Activated CD8-positive, alpha-beta T cell treated with anti-CD3 and anti-CD28 coated beads for 36 hours (primary cell): ENCODE measurements at regions of chr5 and their contacts with region 1.

Region 1: DNA sequence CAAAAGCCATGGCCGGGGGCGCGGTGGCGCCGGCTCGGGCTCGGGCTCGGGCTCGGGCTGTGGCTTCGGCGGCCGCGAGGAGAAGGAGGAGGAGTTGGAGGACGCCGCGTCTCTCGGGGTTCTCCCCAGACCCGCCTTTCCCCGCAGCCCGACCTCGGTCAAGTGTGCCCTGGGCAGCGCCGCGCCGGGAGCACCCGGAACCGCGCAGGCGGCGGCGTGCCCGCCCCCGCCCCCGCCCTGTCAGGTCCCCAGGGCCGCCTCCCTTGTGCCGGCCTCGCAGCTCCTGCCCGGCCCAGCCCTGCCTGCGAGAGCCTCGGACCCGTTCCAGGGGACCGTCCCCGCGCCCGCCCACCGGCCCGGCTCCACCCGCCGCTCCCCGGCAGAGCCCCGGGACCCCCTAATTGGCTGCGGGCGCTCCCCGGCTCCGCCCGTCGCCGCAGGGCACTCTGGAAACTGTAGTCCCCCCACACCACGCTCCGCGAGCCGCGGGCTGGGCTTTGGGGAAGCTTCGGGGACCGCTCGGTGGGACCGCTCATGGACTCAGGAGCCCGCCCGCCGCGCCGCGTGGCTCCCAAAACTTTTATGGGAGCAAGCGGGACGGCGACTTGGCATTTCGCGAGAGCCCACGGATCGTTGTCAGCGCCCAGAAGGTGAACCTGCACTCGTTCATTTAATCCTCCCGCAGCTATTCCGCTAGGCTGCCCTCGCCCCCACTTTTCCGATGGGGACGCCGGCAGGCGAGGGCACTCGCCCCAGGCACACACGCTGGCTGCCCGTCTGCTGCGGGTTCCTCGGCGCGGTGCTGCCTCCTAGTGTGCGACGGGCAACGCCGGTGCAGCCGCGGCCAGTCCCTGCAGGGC is at the start of gene STK10:
- DNase-seq: peak; percentile 93
- ATAC-seq: peak; percentile 76
- H3K4me3 Mint-ChIP-seq: peak within 1 kb of the TSS; percentile 92
- H3K27ac Mint-ChIP-seq: peak within 1 kb of the TSS; percentile 96
- H3K4me1 Mint-ChIP-seq: peaks cover 18% of the 10 kb centered on the region
- H3K27me3 Mint-ChIP-seq: no peaks in the 10 kb centered on the region
- CTCF ChIP-seq: peak; percentile 90
- total RNA-seq, gene STK10: 142 to 143 TPM

Region 2: GRCh38 chr5:171907725-171908343 is 280.4 kb before region 1 on chr5:
- CTCF ChIA-PET with region 1: interaction called, 9 read pairs
- POLR2A ChIA-PET with region 1: no interaction called
- intact Hi-C with region 1: loop called (anchors 5 kb)
- DNase-seq: peak; percentile 67
- ATAC-seq: peak; percentile 81
- H3K4me3 Mint-ChIP-seq: no peak overlapping the region
- H3K27ac Mint-ChIP-seq: peak overlapping the region; percentile 79
- H3K4me1 Mint-ChIP-seq: peaks cover 63% of the 10 kb centered on the region
- H3K27me3 Mint-ChIP-seq: no peaks in the 10 kb centered on the region
- CTCF ChIP-seq: peak; percentile 88

Region 3: GRCh38 chr5:172071289-172071875 is 116.9 kb before region 1 on chr5:
- CTCF ChIA-PET with region 1: interaction called, 21 read pairs
- POLR2A ChIA-PET with region 1: interaction called, 3 read pairs
- intact Hi-C with region 1: loop called (anchors 2 kb)
- DNase-seq: no peak
- ATAC-seq: peak; percentile 15
- H3K4me3 Mint-ChIP-seq: no peak overlapping the region
- H3K27ac Mint-ChIP-seq: peak overlapping the region; percentile 73
- H3K4me1 Mint-ChIP-seq: peaks cover 39% of the 10 kb centered on the region
- H3K27me3 Mint-ChIP-seq: no peaks in the 10 kb centered on the region
- CTCF ChIP-seq: no peak

Region 4: DNA sequence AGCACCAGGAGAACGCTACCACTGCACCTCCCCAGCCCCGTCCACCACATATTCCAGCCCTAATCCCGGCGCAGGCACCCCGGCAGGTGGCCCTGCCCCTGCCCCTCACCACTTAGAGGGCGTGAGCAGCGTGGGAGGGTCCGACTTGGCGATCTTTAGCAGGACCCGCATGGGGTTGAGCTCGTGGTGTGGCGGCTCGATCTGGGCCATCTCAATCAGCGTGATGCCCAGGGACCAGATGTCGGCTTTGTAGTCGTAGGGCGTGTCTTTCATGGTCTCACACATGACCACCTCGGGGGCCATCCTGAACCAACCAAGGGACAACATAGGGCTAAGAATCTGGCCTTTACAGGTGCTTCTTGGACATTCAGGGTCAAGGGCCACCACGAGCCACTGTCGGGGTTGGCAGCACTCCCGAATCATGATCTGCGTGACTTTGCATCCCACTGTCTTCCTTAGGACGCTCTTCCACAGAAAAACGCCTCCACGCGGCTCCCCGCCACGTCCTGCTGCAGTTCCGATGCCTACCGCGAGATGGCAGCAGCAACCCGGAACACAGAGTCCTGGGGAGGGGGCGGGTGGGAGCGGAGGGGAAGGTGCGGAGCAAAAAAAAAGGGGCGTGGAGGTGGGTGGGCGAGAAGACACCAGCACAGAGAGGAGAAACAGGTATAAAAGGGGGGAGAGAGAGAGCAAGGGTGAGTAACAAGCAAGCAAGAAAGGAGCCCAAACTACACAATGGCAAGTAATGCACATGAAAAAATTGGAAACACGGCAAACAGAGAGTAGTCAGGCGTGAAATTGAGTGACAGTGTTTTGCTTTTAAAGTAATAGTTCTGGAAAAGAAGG is 81.5 kb before region 1 on chr5:
- CTCF ChIA-PET with region 1: interaction called, 129 read pairs
- POLR2A ChIA-PET with region 1: interaction called, 25 read pairs
- intact Hi-C with region 1: no loop called
- DNase-seq: peak; percentile 74
- ATAC-seq: no peak
- H3K4me3 Mint-ChIP-seq: no peak overlapping the region
- H3K27ac Mint-ChIP-seq: peak overlapping the region; percentile 84
- H3K4me1 Mint-ChIP-seq: peaks cover 60% of the 10 kb centered on the region
- H3K27me3 Mint-ChIP-seq: no peaks in the 10 kb centered on the region
- CTCF ChIP-seq: peak; percentile 98

Region 5: DNA sequence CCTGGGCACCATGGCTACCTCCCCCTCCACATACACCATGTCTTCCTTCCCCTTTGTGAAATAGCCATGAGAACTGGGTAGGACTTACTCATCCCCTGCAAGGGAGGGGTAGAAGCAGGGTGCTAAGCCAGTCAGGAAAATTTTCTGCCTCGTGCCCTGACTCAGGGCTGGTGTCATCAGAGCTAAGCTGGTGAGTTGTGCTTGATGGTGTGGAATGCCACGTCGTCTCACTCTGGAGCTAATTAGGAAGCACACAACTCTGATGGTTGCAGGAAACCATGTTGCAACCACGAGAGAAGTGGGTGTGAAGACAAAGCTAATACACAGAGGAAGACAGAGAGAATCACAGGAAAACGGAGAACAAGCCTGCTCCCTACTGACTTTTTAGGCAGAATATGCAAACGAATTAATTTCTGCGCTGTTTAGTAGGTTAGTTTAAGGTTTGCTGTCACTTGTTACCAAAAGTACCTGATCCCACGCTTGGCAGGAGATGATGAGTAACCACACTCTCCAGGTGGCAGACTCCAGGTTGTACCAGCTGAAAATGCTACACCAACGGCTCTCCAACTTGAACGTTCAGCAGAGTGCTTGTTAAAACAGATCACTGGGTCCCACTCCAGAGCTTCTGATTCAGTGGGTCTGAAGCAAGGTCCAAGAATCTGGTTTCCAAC is 54.8 kb before region 1 on chr5:
- CTCF ChIA-PET with region 1: interaction called, 10 read pairs
- POLR2A ChIA-PET with region 1: interaction called, 10 read pairs
- intact Hi-C with region 1: no loop called
- DNase-seq: peak; percentile 81
- ATAC-seq: peak; percentile 96
- H3K4me3 Mint-ChIP-seq: peak overlapping the region; percentile 42
- H3K27ac Mint-ChIP-seq: peak overlapping the region; percentile 97
- H3K4me1 Mint-ChIP-seq: peaks cover 62% of the 10 kb centered on the region
- H3K27me3 Mint-ChIP-seq: no peaks in the 10 kb centered on the region
- CTCF ChIP-seq: no peak

Region 6: GRCh38 chr5:172283020-172283861 is 95.0 kb after region 1 on chr5 and contains the start of gene UBTD2:
- CTCF ChIA-PET with region 1: interaction called, 32 read pairs
- POLR2A ChIA-PET with region 1: interaction called, 6 read pairs
- intact Hi-C with region 1: loop called (anchors 5 kb)
- DNase-seq: peak; percentile 82
- ATAC-seq: peak; percentile 82
- H3K4me3 Mint-ChIP-seq: peak within 1 kb of the TSS; percentile 84
- H3K27ac Mint-ChIP-seq: peak within 1 kb of the TSS; percentile 81
- H3K4me1 Mint-ChIP-seq: peaks cover 21% of the 10 kb centered on the region
- H3K27me3 Mint-ChIP-seq: no peaks in the 10 kb centered on the region
- CTCF ChIP-seq: peak; percentile 76
- total RNA-seq, gene UBTD2: 7.9 to 8.3 TPM

Region 7: GRCh38 chr5:172479044-172479783 is 291.0 kb after region 1 on chr5:
- CTCF ChIA-PET with region 1: no interaction called
- POLR2A ChIA-PET with region 1: no interaction called
- intact Hi-C with region 1: no loop called
- DNase-seq: peak; percentile 81
- ATAC-seq: peak; percentile 98
- H3K4me3 Mint-ChIP-seq: no peak overlapping the region
- H3K27ac Mint-ChIP-seq: no peak overlapping the region
- H3K4me1 Mint-ChIP-seq: no peaks in the 10 kb centered on the region
- H3K27me3 Mint-ChIP-seq: no peaks in the 10 kb centered on the region
- CTCF ChIP-seq: peak; percentile 75